Activated B cell treated with CpG ODN at 0.5 μM for 24 hours (primary cell): ENCODE measurements at regions of chr4 and their contacts with region 1.

Region 1: GRCh38 chr4:445410-445809 is 53.5 kb downstream of the ZNF721 start:
- DNase-seq: no peak
- ATAC-seq: no peak
- H3K4me3 Mint-ChIP-seq: no peak overlapping the region
- H3K27ac Mint-ChIP-seq: no peak overlapping the region
- H3K4me1 Mint-ChIP-seq: no peaks in the 10 kb centered on the region
- H3K27me3 Mint-ChIP-seq: no peaks in the 10 kb centered on the region
- CTCF ChIP-seq: no peak

Region 2: GRCh38 chr4:373062-373839 is 72.2 kb before region 1 on chr4:
- CTCF ChIA-PET with region 1: no interaction called
- POLR2A ChIA-PET with region 1: no interaction called
- intact Hi-C with region 1: loop called (anchors 10 kb)
- DNase-seq: no peak
- ATAC-seq: no peak
- H3K4me3 Mint-ChIP-seq: no peak overlapping the region
- H3K27ac Mint-ChIP-seq: no peak overlapping the region
- H3K4me1 Mint-ChIP-seq: no peaks in the 10 kb centered on the region
- H3K27me3 Mint-ChIP-seq: no peaks in the 10 kb centered on the region
- CTCF ChIP-seq: no peak

Region 3: DNA sequence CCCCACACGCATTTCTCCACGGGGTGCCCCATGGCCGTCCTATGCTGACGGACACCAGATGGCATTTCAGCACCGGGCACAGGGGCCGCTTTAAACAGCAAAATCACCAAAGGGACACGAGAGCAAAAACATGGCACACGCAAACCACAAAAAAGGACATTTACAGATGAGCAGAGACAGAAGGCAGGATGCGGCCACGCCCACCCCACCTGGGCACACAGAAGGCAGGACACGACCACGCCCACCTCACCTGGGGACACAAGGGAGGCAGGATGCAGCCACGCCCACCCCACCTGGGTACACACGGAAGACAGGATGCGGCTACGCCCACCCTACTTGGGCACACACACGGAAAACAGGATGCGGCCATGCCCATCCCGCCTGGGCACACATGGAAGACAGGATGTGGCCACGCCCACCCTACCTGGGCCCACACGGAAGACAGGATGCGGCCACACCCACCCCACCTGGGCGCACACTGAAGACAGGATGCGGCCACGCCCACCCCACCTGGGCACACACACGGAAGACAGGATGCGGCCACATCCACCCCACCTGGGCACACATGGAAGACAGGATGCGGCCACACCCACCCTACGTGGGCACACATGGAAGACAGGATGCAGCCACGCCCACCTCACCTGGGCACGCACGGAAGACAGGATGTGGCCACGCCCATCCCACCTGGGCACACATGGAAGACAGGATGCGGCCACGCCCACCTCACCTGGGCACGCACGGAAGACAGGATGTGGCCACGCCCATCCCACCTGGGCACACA is 1169.6 kb after region 1 on chr4:
- CTCF ChIA-PET with region 1: no interaction called
- POLR2A ChIA-PET with region 1: no interaction called
- intact Hi-C with region 1: no loop called
- DNase-seq: no peak
- ATAC-seq: no peak
- H3K4me3 Mint-ChIP-seq: no peak overlapping the region
- H3K27ac Mint-ChIP-seq: no peak overlapping the region
- H3K4me1 Mint-ChIP-seq: no peaks in the 10 kb centered on the region
- H3K27me3 Mint-ChIP-seq: no peaks in the 10 kb centered on the region
- CTCF ChIP-seq: no peak

Region 4: GRCh38 chr4:1792832-1793495 is 1347.6 kb after region 1 on chr4 and contains the start of gene FGFR3:
- CTCF ChIA-PET with region 1: no interaction called
- POLR2A ChIA-PET with region 1: no interaction called
- intact Hi-C with region 1: no loop called
- DNase-seq: peak; percentile 53
- ATAC-seq: peak; percentile 91
- H3K4me3 Mint-ChIP-seq: peak within 1 kb of the TSS; percentile 53
- H3K27ac Mint-ChIP-seq: no peak within 1 kb of the TSS
- H3K4me1 Mint-ChIP-seq: peaks cover 2% of the 10 kb centered on the region
- H3K27me3 Mint-ChIP-seq: peaks cover 12% of the 10 kb centered on the region
- CTCF ChIP-seq: no peak
- total RNA-seq, gene FGFR3: 0.10 and 0.40 TPM in 2 replicates